ENCODE measurements at regions of chr12 and their contacts with region 1.

Region 1: GRCh38 chr12:76763743-76764675 is at the start of gene ZDHHC17:
- DNase-seq: peak; percentile 95
- ATAC-seq: peak; percentile 86
- H3K4me3 ChIP-seq: peak within 1 kb of the TSS; percentile 82 to 94 (median 92)
- H3K4me3 Mint-ChIP-seq: peak within 1 kb of the TSS; percentile 99
- H3K27ac ChIP-seq: peak within 1 kb of the TSS; percentile 94 to 96
- H3K27ac Mint-ChIP-seq: peak within 1 kb of the TSS; percentile 99
- H3K4me1 ChIP-seq: peaks cover 17 to 29% of the 10 kb centered on the region in 2 donors
- H3K4me1 Mint-ChIP-seq: peaks cover 47% of the 10 kb centered on the region
- H3K27me3 ChIP-seq: no peaks in the 10 kb centered on the region
- H3K27me3 Mint-ChIP-seq: no peaks in the 10 kb centered on the region
- CTCF ChIP-seq: no peak
- total RNA-seq, gene ZDHHC17: 75.0 and 86.7 TPM in 2 replicates

Region 2: DNA sequence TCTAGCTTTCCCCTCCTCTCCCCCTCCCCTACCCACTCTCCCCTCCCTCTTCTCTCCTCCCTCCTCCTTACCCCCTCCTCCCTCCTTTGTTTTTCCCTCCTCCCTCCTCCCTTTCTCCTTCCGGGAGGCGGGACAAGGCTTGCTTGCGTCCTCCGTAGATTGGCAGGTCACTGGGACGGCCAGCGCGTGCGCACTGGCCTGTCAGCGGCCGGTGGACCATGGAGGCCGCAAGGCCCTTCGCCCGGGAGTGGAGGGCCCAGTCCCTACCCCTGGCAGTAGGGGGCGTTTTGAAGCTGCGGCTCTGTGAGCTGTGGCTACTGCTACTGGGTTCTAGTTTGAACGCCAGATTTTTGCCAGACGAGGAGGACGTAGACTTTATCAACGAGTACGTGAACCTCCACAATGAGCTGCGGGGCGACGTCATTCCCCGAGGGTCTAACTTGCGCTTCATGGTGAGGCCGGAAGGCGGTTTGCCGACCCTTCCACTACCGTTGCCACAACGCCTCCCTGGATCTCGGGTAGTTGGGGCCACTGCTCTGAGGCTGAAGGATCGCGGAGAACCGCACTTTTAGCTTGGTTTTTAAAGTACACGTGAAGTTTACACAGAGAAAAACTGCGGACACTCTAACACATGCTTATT is 1373.0 kb before region 1 on chr12 and contains the start of gene GLIPR1L2:
- CTCF ChIA-PET with region 1: no interaction called
- POLR2A ChIA-PET with region 1: no interaction called
- intact Hi-C with region 1: loop called (anchors 2 kb)
- DNase-seq: peak; percentile 94
- ATAC-seq: peak; percentile 94
- H3K4me3 ChIP-seq: peak within 1 kb of the TSS; percentile 66 to 85 (median 75)
- H3K4me3 Mint-ChIP-seq: peak within 1 kb of the TSS; percentile 98
- H3K27ac ChIP-seq: peak within 1 kb of the TSS; percentile 73 to 85
- H3K27ac Mint-ChIP-seq: peak within 1 kb of the TSS; percentile 99
- H3K4me1 ChIP-seq: peaks cover 23 to 24% of the 10 kb centered on the region in 2 donors
- H3K4me1 Mint-ChIP-seq: peaks cover 33% of the 10 kb centered on the region
- H3K27me3 ChIP-seq: no peaks in the 10 kb centered on the region
- H3K27me3 Mint-ChIP-seq: no peaks in the 10 kb centered on the region
- CTCF ChIP-seq: peak; percentile 81
- total RNA-seq, gene GLIPR1L2: 0.46 and 0.91 TPM in 2 replicates

Region 3: DNA sequence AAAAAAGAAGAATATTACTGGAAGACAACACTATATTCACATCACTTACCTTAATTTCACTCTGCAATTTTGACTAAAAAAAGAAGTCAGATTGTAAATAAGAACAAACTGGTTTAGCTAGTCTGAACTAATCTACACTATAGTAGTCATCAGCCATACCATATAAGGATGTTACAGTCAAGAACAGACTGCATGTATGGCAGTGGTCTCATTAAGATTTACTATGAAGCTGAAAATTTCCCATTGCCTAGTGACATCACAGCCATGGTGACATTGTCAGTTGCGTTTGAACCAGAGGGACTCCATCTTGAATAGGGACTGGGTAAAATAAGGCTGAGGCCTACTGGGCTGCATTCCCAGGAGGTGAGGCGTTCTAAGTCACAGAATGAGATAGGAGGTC is 255.8 kb before region 1 on chr12:
- CTCF ChIA-PET with region 1: no interaction called
- POLR2A ChIA-PET with region 1: no interaction called
- intact Hi-C with region 1: loop called (anchors 2 kb)
- DNase-seq: no peak
- ATAC-seq: no peak
- H3K4me3 ChIP-seq: no peak overlapping the region
- H3K4me3 Mint-ChIP-seq: no peak overlapping the region
- H3K27ac ChIP-seq: no peak overlapping the region
- H3K27ac Mint-ChIP-seq: peak overlapping the region; percentile 26
- H3K4me1 ChIP-seq: peaks cover 16 to 29% of the 10 kb centered on the region in 2 donors
- H3K4me1 Mint-ChIP-seq: peaks cover 51% of the 10 kb centered on the region
- H3K27me3 ChIP-seq: no peaks in the 10 kb centered on the region
- H3K27me3 Mint-ChIP-seq: no peaks in the 10 kb centered on the region
- CTCF ChIP-seq: no peak

Region 4: GRCh38 chr12:76706101-76706500 is 57.9 kb before region 1 on chr12:
- CTCF ChIA-PET with region 1: no interaction called
- POLR2A ChIA-PET with region 1: no interaction called
- intact Hi-C with region 1: no loop called
- DNase-seq: no peak
- ATAC-seq: no peak
- H3K4me3 ChIP-seq: no peak overlapping the region
- H3K4me3 Mint-ChIP-seq: no peak overlapping the region
- H3K27ac ChIP-seq: no peak overlapping the region
- H3K27ac Mint-ChIP-seq: no peak overlapping the region
- H3K4me1 ChIP-seq: no peaks in the 10 kb centered on the region
- H3K4me1 Mint-ChIP-seq: peaks cover 3% of the 10 kb centered on the region
- H3K27me3 ChIP-seq: no peaks in the 10 kb centered on the region
- H3K27me3 Mint-ChIP-seq: peaks cover 11% of the 10 kb centered on the region
- CTCF ChIP-seq: no peak

Region 5: GRCh38 chr12:76777765-76778216 is 13.8 kb after region 1 on chr12:
- CTCF ChIA-PET with region 1: interaction called, 4 read pairs
- POLR2A ChIA-PET with region 1: interaction called, 17 read pairs
- intact Hi-C with region 1: loop called (anchors 1 kb)
- DNase-seq: peak; percentile 89
- ATAC-seq: peak; percentile 97
- H3K4me3 ChIP-seq: no peak overlapping the region
- H3K4me3 Mint-ChIP-seq: peak overlapping the region; percentile 2
- H3K27ac ChIP-seq: peak overlapping the region; percentile 25 to 66
- H3K27ac Mint-ChIP-seq: peak overlapping the region; percentile 33
- H3K4me1 ChIP-seq: peaks cover 13 to 15% of the 10 kb centered on the region in 2 donors
- H3K4me1 Mint-ChIP-seq: peaks cover 53% of the 10 kb centered on the region
- H3K27me3 ChIP-seq: no peaks in the 10 kb centered on the region
- H3K27me3 Mint-ChIP-seq: no peaks in the 10 kb centered on the region
- CTCF ChIP-seq: no peak

Region 6: GRCh38 chr12:77065361-77066204 is 301.6 kb after region 1 on chr12 and contains the start of gene E2F7:
- CTCF ChIA-PET with region 1: no interaction called
- POLR2A ChIA-PET with region 1: no interaction called
- intact Hi-C with region 1: loop called (anchors 10 kb)
- DNase-seq: peak; percentile 86
- ATAC-seq: peak; percentile 89
- H3K4me3 ChIP-seq: peak within 1 kb of the TSS; percentile 47 to 79 (median 63)
- H3K4me3 Mint-ChIP-seq: peak within 1 kb of the TSS; percentile 90
- H3K27ac ChIP-seq: no peak within 1 kb of the TSS
- H3K27ac Mint-ChIP-seq: peak within 1 kb of the TSS; percentile 48
- H3K4me1 ChIP-seq: peaks cover 22 to 31% of the 10 kb centered on the region in 2 donors
- H3K4me1 Mint-ChIP-seq: peaks cover 35% of the 10 kb centered on the region
- H3K27me3 ChIP-seq: peaks cover 0 to 22% (median 13%) of the 10 kb centered on the region in 4 experiments
- H3K27me3 Mint-ChIP-seq: peaks cover 10% of the 10 kb centered on the region
- CTCF ChIP-seq: no peak
- total RNA-seq, gene E2F7: 0.29 and 0.42 TPM in 2 replicates